CD8-positive, alpha-beta T cell (primary cell): ENCODE measurements at regions of chr1 and their contacts with region 1.

Region 1: GRCh38 chr1:10032590-10033358 is at the start of gene UBE4B:
- DNase-seq: peak; percentile 96 to 100 (median 99)
- ATAC-seq: peak; percentile 94
- H3K4me3 ChIP-seq: peak within 1 kb of the TSS; percentile 95 to 98
- H3K4me3 Mint-ChIP-seq: peak within 1 kb of the TSS; percentile 97
- H3K27ac ChIP-seq: peak within 1 kb of the TSS; percentile 93 to 94
- H3K27ac Mint-ChIP-seq: peak within 1 kb of the TSS; percentile 98
- H3K4me1 ChIP-seq: peaks cover 18% of the 10 kb centered on the region
- H3K4me1 Mint-ChIP-seq: peaks cover 23% of the 10 kb centered on the region
- H3K27me3 ChIP-seq: no peaks in the 10 kb centered on the region
- H3K27me3 Mint-ChIP-seq: no peaks in the 10 kb centered on the region
- CTCF ChIP-seq: peak; percentile 89
- total RNA-seq, gene UBE4B: 25.8 to 32.2 TPM

Region 2: DNA sequence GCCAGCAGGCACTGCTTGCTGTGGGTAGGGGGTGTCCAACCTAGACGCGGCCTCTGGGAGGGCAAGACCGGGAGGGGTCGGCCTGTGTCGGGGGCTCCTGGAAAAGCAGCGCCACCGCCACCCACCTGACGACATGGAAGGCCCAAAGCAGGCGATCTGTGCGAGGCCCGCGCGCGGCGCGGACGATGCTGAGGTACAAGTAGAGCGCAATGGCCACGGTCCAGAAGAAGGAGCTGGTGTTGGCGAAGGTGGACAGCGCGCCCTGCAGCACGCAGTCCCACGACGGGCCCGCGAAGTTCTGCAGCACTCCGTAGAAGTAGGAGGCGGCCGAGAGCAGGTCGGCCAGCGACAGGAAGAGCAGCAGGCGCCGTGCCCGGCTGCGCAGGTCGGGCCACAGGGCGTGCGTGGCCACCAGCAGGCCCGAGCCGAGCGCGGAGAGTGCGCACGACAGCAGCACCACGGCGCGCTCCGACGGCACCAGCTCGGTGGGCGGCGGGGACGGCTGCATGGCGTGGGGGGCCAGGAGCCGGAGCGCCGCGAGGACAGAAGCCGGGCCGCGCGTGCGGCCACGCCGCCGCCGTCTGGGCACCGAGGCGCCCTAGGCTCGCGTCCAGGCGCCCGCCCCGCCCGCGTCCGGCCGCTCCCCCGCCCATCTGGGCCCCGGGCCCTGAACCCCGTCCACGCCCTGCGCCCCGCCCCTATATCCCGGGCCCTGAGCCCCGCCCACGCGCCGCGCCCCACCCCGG is 904.1 kb before region 1 on chr1 and contains the start of gene GPR157:
- CTCF ChIA-PET with region 1: no interaction called
- POLR2A ChIA-PET with region 1: no interaction called
- intact Hi-C with region 1: loop called in 1 of 2 experiments (anchors 2 kb)
- DNase-seq: peak; percentile 56 to 88 (median 81)
- ATAC-seq: peak; percentile 84
- H3K4me3 ChIP-seq: peak within 1 kb of the TSS; percentile 61 to 68
- H3K4me3 Mint-ChIP-seq: peak within 1 kb of the TSS; percentile 90
- H3K27ac ChIP-seq: peak within 1 kb of the TSS; percentile 37 to 50
- H3K27ac Mint-ChIP-seq: peak within 1 kb of the TSS; percentile 75
- H3K4me1 ChIP-seq: peaks cover 33% of the 10 kb centered on the region
- H3K4me1 Mint-ChIP-seq: peaks cover 35% of the 10 kb centered on the region
- H3K27me3 ChIP-seq: no peaks in the 10 kb centered on the region
- H3K27me3 Mint-ChIP-seq: no peaks in the 10 kb centered on the region
- CTCF ChIP-seq: no peak
- total RNA-seq, gene GPR157: 1.9 to 2.9 TPM

Region 3: GRCh38 chr1:9588551-9589143 is 444.1 kb before region 1 on chr1 and contains the start of gene TMEM201:
- CTCF ChIA-PET with region 1: no interaction called
- POLR2A ChIA-PET with region 1: no interaction called
- intact Hi-C with region 1: loop called (anchors 1 kb)
- DNase-seq: peak; percentile 87 to 97 (median 95)
- ATAC-seq: peak; percentile 94
- H3K4me3 ChIP-seq: peak within 1 kb of the TSS; percentile 53 to 59
- H3K4me3 Mint-ChIP-seq: peak within 1 kb of the TSS; percentile 88
- H3K27ac ChIP-seq: peak within 1 kb of the TSS; percentile 21 to 32
- H3K27ac Mint-ChIP-seq: peak within 1 kb of the TSS; percentile 74
- H3K4me1 ChIP-seq: peaks cover 22% of the 10 kb centered on the region
- H3K4me1 Mint-ChIP-seq: peaks cover 24% of the 10 kb centered on the region
- H3K27me3 ChIP-seq: no peaks in the 10 kb centered on the region
- H3K27me3 Mint-ChIP-seq: no peaks in the 10 kb centered on the region
- CTCF ChIP-seq: peak; percentile 77
- total RNA-seq, gene TMEM201: 10.7 to 11.5 TPM

Region 4: DNA sequence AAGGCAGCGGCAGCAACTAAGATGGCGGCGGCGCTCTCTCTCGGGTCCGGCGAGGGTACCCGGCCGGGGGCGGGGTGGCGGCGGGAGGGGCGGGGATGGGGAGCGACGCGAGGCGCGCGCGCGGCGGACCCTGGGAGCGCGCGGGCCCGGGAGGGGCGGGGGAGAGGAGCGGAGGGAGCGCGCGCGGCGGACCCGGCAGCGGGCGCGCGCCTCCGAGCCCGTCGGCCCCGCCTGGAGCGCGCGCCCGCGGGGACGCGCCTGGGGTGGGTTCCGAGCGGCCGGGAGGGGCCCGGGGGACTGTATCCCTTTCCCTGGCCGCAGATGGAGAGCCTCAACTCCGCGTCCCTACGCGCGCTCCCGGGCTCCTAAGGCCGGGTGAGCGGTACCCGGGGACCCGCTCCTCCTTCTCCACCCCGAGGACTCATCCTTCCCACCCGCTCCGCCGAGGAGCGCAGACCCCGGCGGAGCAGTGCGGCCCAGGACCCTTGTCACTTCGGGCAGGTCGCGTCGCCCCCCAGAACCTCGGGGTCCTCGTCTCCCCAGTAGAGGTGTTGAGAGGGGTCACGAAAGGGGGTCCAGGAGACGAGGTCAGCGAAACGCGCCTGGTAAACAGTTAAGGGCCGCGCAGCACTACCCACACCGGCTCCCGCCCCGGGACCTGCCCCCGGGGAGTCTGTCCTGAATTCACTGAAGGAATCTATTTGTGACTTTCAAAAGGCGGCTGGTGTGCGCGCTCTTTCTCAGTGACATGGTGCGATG is 208.7 kb before region 1 on chr1 and contains the start of gene CLSTN1:
- CTCF ChIA-PET with region 1: no interaction called
- POLR2A ChIA-PET with region 1: no interaction called
- intact Hi-C with region 1: loop called in 1 of 2 experiments (anchors 2 kb)
- DNase-seq: peak; percentile 76 to 93 (median 91)
- ATAC-seq: peak; percentile 72
- H3K4me3 ChIP-seq: peak within 1 kb of the TSS; percentile 58 to 72
- H3K4me3 Mint-ChIP-seq: peak within 1 kb of the TSS; percentile 96
- H3K27ac ChIP-seq: peak within 1 kb of the TSS; percentile 37 to 76
- H3K27ac Mint-ChIP-seq: peak within 1 kb of the TSS; percentile 89
- H3K4me1 ChIP-seq: peaks cover 36% of the 10 kb centered on the region
- H3K4me1 Mint-ChIP-seq: peaks cover 43% of the 10 kb centered on the region
- H3K27me3 ChIP-seq: no peaks in the 10 kb centered on the region
- H3K27me3 Mint-ChIP-seq: no peaks in the 10 kb centered on the region
- CTCF ChIP-seq: no peak
- total RNA-seq, gene CLSTN1: 50.0 to 51.1 TPM

Region 5: GRCh38 chr1:10152709-10153284 is 120.0 kb after region 1 on chr1:
- CTCF ChIA-PET with region 1: no interaction called
- POLR2A ChIA-PET with region 1: no interaction called
- intact Hi-C with region 1: no loop called
- DNase-seq: peak in 4 of 9 experiments; percentile 7 to 24 (median 14)
- ATAC-seq: no peak
- H3K4me3 ChIP-seq: no peak overlapping the region
- H3K4me3 Mint-ChIP-seq: no peak overlapping the region
- H3K27ac ChIP-seq: no peak overlapping the region
- H3K27ac Mint-ChIP-seq: no peak overlapping the region
- H3K4me1 ChIP-seq: no peaks in the 10 kb centered on the region
- H3K4me1 Mint-ChIP-seq: no peaks in the 10 kb centered on the region
- H3K27me3 ChIP-seq: no peaks in the 10 kb centered on the region
- H3K27me3 Mint-ChIP-seq: no peaks in the 10 kb centered on the region
- CTCF ChIP-seq: peak; percentile 33

Region 6: GRCh38 chr1:10209905-10210810 is 177.4 kb after region 1 on chr1 and contains the start of gene KIF1B:
- CTCF ChIA-PET with region 1: no interaction called
- POLR2A ChIA-PET with region 1: no interaction called
- intact Hi-C with region 1: loop called (anchors 2 to 5 kb)
- DNase-seq: peak; percentile 92 to 98 (median 97)
- ATAC-seq: peak; percentile 98
- H3K4me3 ChIP-seq: peak within 1 kb of the TSS; percentile 67 to 82
- H3K4me3 Mint-ChIP-seq: peak within 1 kb of the TSS; percentile 91
- H3K27ac ChIP-seq: peak within 1 kb of the TSS; percentile 54 to 60
- H3K27ac Mint-ChIP-seq: peak within 1 kb of the TSS; percentile 55
- H3K4me1 ChIP-seq: peaks cover 5% of the 10 kb centered on the region
- H3K4me1 Mint-ChIP-seq: peaks cover 25% of the 10 kb centered on the region
- H3K27me3 ChIP-seq: peaks cover 0 to 2% of the 10 kb centered on the region in 2 experiments
- H3K27me3 Mint-ChIP-seq: peaks cover 2% of the 10 kb centered on the region
- CTCF ChIP-seq: peak; percentile 99
- total RNA-seq, gene KIF1B: 6.1 to 7.2 TPM

Region 7: GRCh38 chr1:10472220-10473144 is 439.7 kb after region 1 on chr1 and contains the start of gene DFFA:
- CTCF ChIA-PET with region 1: no interaction called
- POLR2A ChIA-PET with region 1: no interaction called
- intact Hi-C with region 1: loop called in 1 of 2 experiments (anchors 2 kb)
- DNase-seq: peak; percentile 83 to 96 (median 91)
- ATAC-seq: peak; percentile 75
- H3K4me3 ChIP-seq: peak within 1 kb of the TSS; percentile 62 to 81
- H3K4me3 Mint-ChIP-seq: peak within 1 kb of the TSS; percentile 92
- H3K27ac ChIP-seq: peak within 1 kb of the TSS; percentile 39 to 66
- H3K27ac Mint-ChIP-seq: peak within 1 kb of the TSS; percentile 90
- H3K4me1 ChIP-seq: peaks cover 34% of the 10 kb centered on the region
- H3K4me1 Mint-ChIP-seq: peaks cover 47% of the 10 kb centered on the region
- H3K27me3 ChIP-seq: no peaks in the 10 kb centered on the region
- H3K27me3 Mint-ChIP-seq: no peaks in the 10 kb centered on the region
- CTCF ChIP-seq: no peak
- total RNA-seq, gene DFFA: 10.0 to 10.4 TPM